Heart left ventricle (tissue), 16 donors: ENCODE measurements at regions of chr7 and their contacts with region 1.

Region 1: GRCh38 chr7:151110941-151111645 is 24.8 kb downstream of the AGAP3 start:
- DNase-seq: peak; percentile 75 to 88 (median 82)
- ATAC-seq: peak; percentile 71 to 88 (median 78)
- H3K4me3 ChIP-seq: no peak overlapping the region
- H3K27ac ChIP-seq: no peak overlapping the region
- H3K4me1 ChIP-seq: peaks cover 0 to 41% (median 23%) of the 10 kb centered on the region in 12 donors
- H3K27me3 ChIP-seq: peaks cover 0 to 5% (median 0%) of the 10 kb centered on the region in 9 donors
- CTCF ChIP-seq: peak; percentile 85 to 96 (median 90)
- POLR2A ChIP-seq: no peak

Region 2: DNA sequence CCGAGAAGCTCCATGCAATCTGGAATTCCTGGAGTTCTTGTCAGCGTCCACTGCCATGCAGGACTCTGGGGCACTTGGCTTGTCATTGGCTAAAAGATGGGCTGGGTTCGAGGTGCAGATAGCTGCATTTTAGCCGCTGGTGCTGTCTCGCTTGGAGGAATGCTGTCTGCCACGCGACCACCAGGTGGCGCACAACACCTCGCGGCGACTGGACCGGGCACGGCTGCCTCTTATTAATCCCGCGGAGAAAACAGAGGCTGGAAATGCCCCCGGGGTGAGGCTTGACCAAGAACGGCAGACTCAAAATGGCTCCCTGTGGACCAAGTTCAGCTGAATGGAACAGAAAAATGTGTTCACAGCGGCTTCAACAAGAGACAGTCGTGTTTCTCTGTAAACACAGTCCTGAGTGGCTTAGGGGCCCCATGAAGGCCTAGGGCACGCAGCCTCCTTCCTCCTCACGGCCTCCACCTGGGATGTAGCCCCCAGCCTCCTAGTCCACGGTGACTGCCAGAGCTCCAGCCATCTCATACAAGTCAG is 212.6 kb before region 1 on chr7:
- intact Hi-C with region 1: loop called in 5 of 10 experiments (anchors 5 to 10 kb)
- DNase-seq: peak; percentile 67 to 90 (median 80)
- ATAC-seq: peak in 3 of 4 donors; percentile 64 to 80 (median 74)
- H3K4me3 ChIP-seq: no peak overlapping the region
- H3K27ac ChIP-seq: no peak overlapping the region
- H3K4me1 ChIP-seq: peaks cover 0 to 33% (median 4%) of the 10 kb centered on the region in 12 donors
- H3K27me3 ChIP-seq: peaks cover 0 to 38% (median 4%) of the 10 kb centered on the region in 9 donors
- CTCF ChIP-seq: peak; percentile 85 to 96 (median 92)
- POLR2A ChIP-seq: no peak

Region 3: GRCh38 chr7:151017953-151018420 is 93.1 kb before region 1 on chr7:
- intact Hi-C with region 1: loop called in 3 of 10 experiments (anchors 2 to 10 kb)
- DNase-seq: peak in 4 of 5 donors; percentile 59 to 88 (median 71)
- ATAC-seq: peak in 3 of 4 donors; percentile 61 to 70 (median 70)
- H3K4me3 ChIP-seq: peak overlapping the region in 8 of 12 donors; percentile 10 to 40 (median 26)
- H3K27ac ChIP-seq: no peak overlapping the region
- H3K4me1 ChIP-seq: peaks cover 0 to 36% (median 19%) of the 10 kb centered on the region in 12 donors
- H3K27me3 ChIP-seq: peaks cover 3 to 52% (median 25%) of the 10 kb centered on the region in 9 donors
- CTCF ChIP-seq: peak; percentile 85 to 98 (median 90)
- POLR2A ChIP-seq: no peak

Region 4: GRCh38 chr7:151028131-151028947 is 82.8 kb before region 1 on chr7 and contains the start of gene ABCB8:
- intact Hi-C with region 1: loop called in 7 of 10 experiments (anchors 1 to 10 kb)
- DNase-seq: peak; percentile 96 to 99 (median 98)
- ATAC-seq: peak; percentile 96 to 98 (median 96)
- H3K4me3 ChIP-seq: peak within 1 kb of the TSS; percentile 62 to 91 (median 76)
- H3K27ac ChIP-seq: peak within 1 kb of the TSS; percentile 15 to 90 (median 85)
- H3K4me1 ChIP-seq: peaks cover 0 to 22% (median 15%) of the 10 kb centered on the region in 12 donors
- H3K27me3 ChIP-seq: peaks cover 0 to 4% (median 0%) of the 10 kb centered on the region in 9 donors
- CTCF ChIP-seq: peak; percentile 43 to 77 (median 60)
- POLR2A ChIP-seq: peak in 1 of 2 donors; percentile 74
- total RNA-seq, gene ABCB8: 13.6 to 34.5 (median 26.0) TPM

Region 5: DNA sequence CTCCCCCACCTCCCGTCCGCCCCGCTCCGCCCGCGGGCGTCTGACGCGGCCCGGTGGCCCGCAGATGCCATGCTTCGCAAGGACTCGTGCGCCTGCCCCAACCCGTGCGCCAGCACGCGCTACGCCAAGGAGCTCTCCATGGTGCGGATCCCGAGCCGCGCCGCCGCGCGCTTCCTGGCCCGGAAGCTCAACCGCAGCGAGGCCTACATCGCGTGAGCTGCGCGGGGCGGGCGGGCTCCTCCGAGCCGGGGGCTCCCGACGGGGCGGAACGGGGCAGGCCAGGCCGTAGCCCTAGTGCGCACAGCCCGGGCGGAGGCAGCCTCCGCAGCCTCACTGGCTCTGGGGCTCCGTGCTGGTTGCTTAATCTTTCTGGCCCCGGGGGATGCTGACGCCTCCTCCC is 60.0 kb before region 1 on chr7:
- intact Hi-C with region 1: no loop called
- DNase-seq: peak; percentile 55 to 84 (median 67)
- ATAC-seq: peak in 3 of 4 donors; percentile 51 to 78 (median 69)
- H3K4me3 ChIP-seq: peak overlapping the region in 7 of 12 donors; percentile 4 to 34 (median 29)
- H3K27ac ChIP-seq: no peak overlapping the region
- H3K4me1 ChIP-seq: peaks cover 0 to 23% (median 9%) of the 10 kb centered on the region in 12 donors
- H3K27me3 ChIP-seq: peaks cover 0 to 3% (median 0%) of the 10 kb centered on the region in 9 donors
- CTCF ChIP-seq: no peak
- POLR2A ChIP-seq: no peak

Region 6: DNA sequence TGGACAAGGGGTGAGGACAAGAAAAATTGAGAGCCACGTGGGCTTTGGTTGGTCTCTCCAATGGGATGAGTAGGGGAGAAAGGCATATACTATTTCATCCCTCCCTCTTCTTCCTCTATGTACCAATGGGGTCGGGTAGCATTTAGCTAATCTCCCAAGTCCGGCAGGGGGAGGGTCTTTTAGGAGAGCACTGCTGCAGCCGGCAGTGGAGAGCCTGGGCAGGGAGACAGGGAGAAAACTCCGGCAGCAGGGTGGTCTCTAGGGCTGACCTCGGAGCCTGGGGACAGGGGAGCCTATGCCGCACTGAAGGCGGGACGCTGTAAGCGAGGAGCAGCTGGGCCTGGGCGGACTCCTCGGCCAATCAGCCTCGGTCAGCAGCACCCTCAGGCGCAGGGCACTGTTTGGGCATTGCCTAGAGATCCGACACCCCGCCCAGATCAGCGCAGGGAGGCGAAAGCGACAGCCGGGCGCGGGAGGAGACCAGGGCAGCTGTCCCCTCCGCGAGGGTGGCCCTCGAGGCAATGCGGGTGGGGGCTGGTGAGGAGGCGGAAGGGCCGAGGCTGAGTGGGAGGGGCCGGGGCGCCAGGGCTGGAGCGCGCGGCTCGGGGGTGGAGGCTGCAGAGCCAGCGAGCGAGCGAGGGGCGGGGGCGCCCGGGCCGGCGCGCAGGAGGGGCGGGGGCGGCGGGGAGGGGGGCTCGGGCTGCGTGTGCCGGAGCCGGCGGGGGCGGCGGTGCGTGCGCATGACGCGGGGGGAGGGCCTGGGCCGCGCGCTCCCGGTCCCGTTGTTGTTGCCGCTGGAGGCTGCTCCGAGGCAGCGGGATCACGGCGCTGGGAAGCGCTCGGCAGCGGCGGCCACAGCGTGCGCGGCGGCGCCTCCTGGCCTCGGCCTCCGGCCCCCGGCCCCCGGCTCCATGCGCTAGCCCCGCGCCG is 25.1 kb before region 1 on chr7 and contains the start of gene AGAP3:
- intact Hi-C with region 1: loop called in 2 of 10 experiments (anchors 1 to 2 kb)
- DNase-seq: peak; percentile 91 to 94 (median 92)
- ATAC-seq: peak; percentile 53 to 69 (median 61)
- H3K4me3 ChIP-seq: peak within 1 kb of the TSS; percentile 60 to 96 (median 81)
- H3K27ac ChIP-seq: peak within 1 kb of the TSS; percentile 85 to 95 (median 92)
- H3K4me1 ChIP-seq: peaks cover 14 to 77% (median 63%) of the 10 kb centered on the region in 12 donors
- H3K27me3 ChIP-seq: no peaks in the 10 kb centered on the region
- CTCF ChIP-seq: no peak
- POLR2A ChIP-seq: peak in 1 of 2 donors; percentile 75
- total RNA-seq, gene AGAP3: 30.3 to 83.7 (median 57.6) TPM

Region 7: DNA sequence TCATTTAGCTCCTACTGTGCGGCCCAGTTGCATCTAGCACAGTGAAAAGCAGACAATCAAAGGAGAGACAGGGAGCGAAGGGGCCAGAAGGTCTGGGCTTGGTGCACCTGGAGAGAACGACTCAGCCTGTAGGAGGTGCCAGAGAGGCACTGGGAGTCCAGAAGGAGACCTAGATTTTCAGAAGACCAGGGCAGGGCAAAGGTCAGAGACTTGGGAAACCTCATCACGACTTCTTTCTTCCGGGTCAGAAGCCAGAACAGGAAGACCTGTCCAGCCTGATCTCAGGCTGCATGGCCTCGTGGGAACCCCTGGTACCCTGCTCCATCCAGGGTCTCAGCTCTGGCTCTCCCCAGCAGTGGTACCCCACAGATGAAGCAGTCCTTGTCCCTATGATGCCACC is 19.7 kb before region 1 on chr7:
- intact Hi-C with region 1: loop called in 2 of 10 experiments (anchors 1 to 2 kb)
- DNase-seq: no peak
- ATAC-seq: no peak
- H3K4me3 ChIP-seq: no peak overlapping the region
- H3K27ac ChIP-seq: peak overlapping the region in 1 of 12 donors; percentile 91
- H3K4me1 ChIP-seq: peaks cover 0 to 64% (median 49%) of the 10 kb centered on the region in 12 donors
- H3K27me3 ChIP-seq: no peaks in the 10 kb centered on the region
- CTCF ChIP-seq: peak in 11 of 12 donors; percentile 16 to 54 (median 39)
- POLR2A ChIP-seq: no peak

Region 8: DNA sequence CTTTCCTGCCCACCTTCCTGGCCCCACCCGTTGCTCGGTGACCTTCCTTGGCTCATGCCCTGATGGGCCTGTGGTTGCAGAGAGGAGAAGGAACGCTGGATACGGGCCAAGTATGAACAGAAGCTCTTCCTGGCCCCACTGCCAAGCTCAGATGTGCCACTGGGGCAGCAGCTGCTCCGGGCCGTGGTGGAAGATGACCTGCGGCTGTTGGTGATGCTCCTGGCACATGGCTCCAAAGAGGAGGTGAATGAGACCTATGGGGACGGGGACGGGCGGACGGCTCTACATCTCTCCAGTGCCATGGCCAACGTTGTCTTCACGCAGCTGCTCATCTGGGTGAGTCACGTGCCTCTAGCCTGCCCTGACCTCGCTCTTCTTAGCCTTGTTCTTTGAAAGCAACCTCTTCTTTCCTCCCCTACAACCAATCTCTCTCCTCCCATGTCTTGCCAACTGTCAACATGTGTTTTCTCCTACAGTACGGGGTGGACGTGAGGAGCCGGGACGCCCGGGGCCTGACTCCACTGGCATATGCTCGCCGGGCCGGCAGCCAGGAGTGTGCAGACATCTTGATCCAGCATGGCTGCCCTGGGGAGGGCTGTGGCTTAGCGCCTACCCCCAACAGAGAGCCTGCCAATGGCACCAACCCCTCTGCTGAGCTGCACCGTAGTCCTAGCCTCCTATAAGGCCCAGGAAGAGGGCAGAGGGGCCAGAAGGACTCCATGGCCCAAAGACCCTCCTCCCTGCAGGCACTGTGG is 32.3 kb after region 1 on chr7:
- intact Hi-C with region 1: no loop called
- DNase-seq: peak in 1 of 5 donors; percentile 55
- ATAC-seq: peak; percentile 6 to 54 (median 32)
- H3K4me3 ChIP-seq: no peak overlapping the region
- H3K27ac ChIP-seq: peak overlapping the region in 3 of 12 donors; percentile 9 to 39 (median 13)
- H3K4me1 ChIP-seq: peaks cover 0 to 20% (median 6%) of the 10 kb centered on the region in 12 donors
- H3K27me3 ChIP-seq: no peaks in the 10 kb centered on the region
- CTCF ChIP-seq: no peak
- POLR2A ChIP-seq: no peak